ENCODE measurements at regions of chr6 and their contacts with region 1.

Region 1: GRCh38 chr6:109482905-109483735 is at the start of gene ZBTB24:
- DNase-seq: peak; percentile 79 to 90
- H3K4me3 ChIP-seq: peak within 1 kb of the TSS; percentile 75
- H3K27ac ChIP-seq: peak within 1 kb of the TSS; percentile 10; the same call in 1 of the 2 replicates
- H3K4me1 ChIP-seq: peaks cover 53% of the 10 kb centered on the region
- H3K27me3 ChIP-seq: no peaks in the 10 kb centered on the region
- CTCF ChIP-seq: no peak
- total RNA-seq, gene ZBTB24: 5.4 and 7.2 TPM in 2 replicates

Region 2: DNA sequence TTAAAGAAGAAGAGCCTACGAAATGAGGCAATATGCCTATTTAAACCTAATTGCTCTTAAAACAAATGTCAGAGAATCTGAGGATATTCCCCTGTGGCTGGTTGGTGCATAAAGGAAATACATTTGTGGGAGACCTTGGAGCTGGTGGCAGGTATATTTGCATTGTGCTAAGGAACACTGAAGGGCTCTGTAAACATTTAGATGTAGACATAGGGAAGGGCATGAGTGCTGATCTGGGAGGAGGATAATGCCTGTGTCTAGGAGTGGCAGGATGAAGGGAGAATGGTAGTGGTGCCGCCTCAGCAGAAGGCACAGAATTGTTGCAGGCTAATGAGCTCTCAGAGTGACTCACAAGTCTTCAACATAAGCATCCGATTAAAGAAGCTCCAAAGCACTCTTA is 186.7 kb before region 1 on chr6:
- CTCF ChIA-PET with region 1: no interaction called
- POLR2A ChIA-PET with region 1: interaction called, 28 read pairs
- intact Hi-C with region 1: no loop called
- DNase-seq: no peak
- H3K4me3 ChIP-seq: no peak overlapping the region
- H3K27ac ChIP-seq: no peak overlapping the region
- H3K4me1 ChIP-seq: peaks cover 31% of the 10 kb centered on the region
- H3K27me3 ChIP-seq: no peaks in the 10 kb centered on the region
- CTCF ChIP-seq: no peak

Region 3: DNA sequence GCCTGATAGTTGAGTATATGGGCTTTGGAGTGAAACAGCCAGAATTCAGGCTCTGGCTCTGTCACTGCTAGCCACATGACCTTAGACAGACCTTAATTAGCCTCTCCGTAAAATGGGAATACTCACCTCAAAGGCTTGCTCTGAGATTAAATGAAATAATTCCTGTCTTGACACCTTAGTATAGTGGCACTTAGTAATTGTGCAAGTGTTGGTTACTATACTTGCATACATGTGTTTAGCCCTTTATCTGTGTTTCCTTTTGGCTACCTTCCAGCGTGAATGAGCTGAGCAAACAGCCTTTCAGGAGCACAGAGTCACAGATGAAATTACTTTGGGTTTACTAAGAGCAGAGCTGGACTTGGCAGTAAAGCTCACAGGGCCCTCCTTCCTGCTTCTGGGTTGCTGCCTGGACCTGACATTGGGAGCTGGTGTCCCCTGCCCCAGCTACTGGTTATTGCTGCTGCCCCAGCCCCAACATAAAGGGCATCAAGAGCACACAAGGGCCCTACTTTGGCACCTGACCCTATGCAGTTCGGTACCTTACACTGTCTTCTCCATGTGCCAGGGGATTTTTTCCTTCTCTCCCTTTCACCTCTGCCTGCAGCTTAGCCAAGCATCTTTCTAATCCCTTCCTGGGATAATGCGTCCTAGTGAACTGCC is 133.6 kb before region 1 on chr6:
- CTCF ChIA-PET with region 1: no interaction called
- POLR2A ChIA-PET with region 1: no interaction called
- intact Hi-C with region 1: no loop called
- DNase-seq: peak; percentile 21 to 91
- H3K4me3 ChIP-seq: no peak overlapping the region
- H3K27ac ChIP-seq: 0 out of 2 replicates have a peak overlapping the region, but pooled peaks have one; percentile 15
- H3K4me1 ChIP-seq: peaks cover 35% of the 10 kb centered on the region
- H3K27me3 ChIP-seq: no peaks in the 10 kb centered on the region
- CTCF ChIP-seq: no peak

Region 4: GRCh38 chr6:109440331-109441068 is 42.6 kb before region 1 on chr6 and contains the starts of genes PPIL6 and SMPD2:
- CTCF ChIA-PET with region 1: no interaction called
- POLR2A ChIA-PET with region 1: interaction called, 8 read pairs
- intact Hi-C with region 1: loop called (anchors 2 kb)
- DNase-seq: peak; percentile 69 to 88
- H3K4me3 ChIP-seq: peak within 1 kb of the TSS; percentile 92
- H3K27ac ChIP-seq: peak within 1 kb of the TSS; percentile 81
- H3K4me1 ChIP-seq: peaks cover 18% of the 10 kb centered on the region
- H3K27me3 ChIP-seq: no peaks in the 10 kb centered on the region
- CTCF ChIP-seq: peak; percentile 56
- total RNA-seq, gene PPIL6: 13.0 and 15.5 TPM in 2 replicates
- total RNA-seq, gene SMPD2: 8.2 and 10.3 TPM in 2 replicates

Region 5: GRCh38 chr6:109526905-109527628 is 43.9 kb after region 1 on chr6:
- CTCF ChIA-PET with region 1: no interaction called
- POLR2A ChIA-PET with region 1: no interaction called
- intact Hi-C with region 1: no loop called
- DNase-seq: peak; percentile 33 to 55
- H3K4me3 ChIP-seq: no peak overlapping the region
- H3K27ac ChIP-seq: no peak overlapping the region
- H3K4me1 ChIP-seq: no peaks in the 10 kb centered on the region
- H3K27me3 ChIP-seq: no peaks in the 10 kb centered on the region
- CTCF ChIP-seq: peak; percentile 80

Measured in PC-9 (cell line).